Panc1 (cell line): ENCODE measurements at regions of chr2 and their contacts with region 1.

Region 1: DNA sequence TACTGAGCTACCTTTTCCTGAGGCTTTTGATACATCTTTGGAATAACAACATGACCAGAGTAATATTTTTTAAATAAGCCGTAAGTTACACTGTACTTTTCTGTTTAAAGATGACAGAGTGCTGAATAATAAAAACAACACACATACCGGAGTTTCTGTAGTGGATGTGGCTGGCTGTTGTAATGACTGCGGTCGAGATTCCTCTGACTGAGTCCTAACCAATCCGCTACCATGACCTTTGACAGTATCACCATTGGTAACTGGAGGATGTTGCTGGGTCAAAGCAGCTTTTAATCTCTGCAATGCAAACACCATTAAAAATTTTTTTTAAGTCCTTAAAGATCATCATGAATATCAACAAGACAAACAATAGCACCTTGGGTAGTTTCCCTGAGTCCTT is 70.7 kb downstream of the ATF2 start:
- DNase-seq: peak; percentile 54
- ATAC-seq: no peak
- H3K4me3 ChIP-seq: no peak overlapping the region
- H3K27ac ChIP-seq: no peak overlapping the region
- H3K4me1 ChIP-seq: no peaks in the 10 kb centered on the region
- H3K27me3 ChIP-seq: no peaks in the 10 kb centered on the region
- CTCF ChIP-seq: no peak

Region 2: DNA sequence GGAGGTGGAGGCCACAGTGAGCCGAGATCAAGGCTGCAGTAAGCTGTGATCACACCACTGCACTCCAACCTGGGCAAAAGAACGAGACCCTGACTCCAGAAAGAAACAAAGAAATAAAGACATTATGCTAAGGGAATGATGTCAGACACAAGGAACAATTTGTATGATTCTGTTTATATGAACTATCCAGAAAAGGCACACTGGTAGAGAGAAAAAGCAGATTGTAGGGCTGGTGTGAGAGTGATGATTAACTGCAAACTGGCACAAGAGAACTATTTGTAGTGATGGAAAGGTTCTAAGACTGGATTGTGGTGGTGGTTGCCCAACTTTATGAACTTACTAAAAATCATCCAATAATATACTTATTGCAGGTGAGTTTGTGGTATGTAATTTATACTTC is 1915.3 kb before region 1 on chr2:
- CTCF ChIA-PET with region 1: no interaction called
- POLR2A ChIA-PET with region 1: interaction called, 13 read pairs
- in situ Hi-C with region 1: no loop called
- intact Hi-C with region 1: no loop called
- DNase-seq: no peak
- ATAC-seq: no peak
- H3K4me3 ChIP-seq: no peak overlapping the region
- H3K27ac ChIP-seq: peak overlapping the region; percentile 95
- H3K4me1 ChIP-seq: peaks cover 47% of the 10 kb centered on the region
- H3K27me3 ChIP-seq: no peaks in the 10 kb centered on the region
- CTCF ChIP-seq: no peak

Region 3: GRCh38 chr2:175039031-175039889 is 58.0 kb before region 1 on chr2:
- CTCF ChIA-PET with region 1: no interaction called
- POLR2A ChIA-PET with region 1: no interaction called
- in situ Hi-C with region 1: no loop called
- intact Hi-C with region 1: no loop called
- DNase-seq: no peak
- ATAC-seq: no peak
- H3K4me3 ChIP-seq: no peak overlapping the region
- H3K27ac ChIP-seq: no peak overlapping the region
- H3K4me1 ChIP-seq: no peaks in the 10 kb centered on the region
- H3K27me3 ChIP-seq: no peaks in the 10 kb centered on the region
- CTCF ChIP-seq: no peak

Region 4: GRCh38 chr2:175154661-175155082 is 57.4 kb after region 1 on chr2:
- CTCF ChIA-PET with region 1: no interaction called
- POLR2A ChIA-PET with region 1: no interaction called
- in situ Hi-C with region 1: no loop called
- intact Hi-C with region 1: no loop called
- DNase-seq: no peak
- ATAC-seq: peak; percentile 78
- H3K4me3 ChIP-seq: no peak overlapping the region
- H3K27ac ChIP-seq: no peak overlapping the region
- H3K4me1 ChIP-seq: peaks cover 17% of the 10 kb centered on the region; the same call in 1 of the 2 replicates
- H3K27me3 ChIP-seq: no peaks in the 10 kb centered on the region
- CTCF ChIP-seq: no peak